BJ (cell line): ENCODE measurements at regions of chr3 and their contacts with region 1.

Region 1: GRCh38 chr3:136189859-136190617 is 6.1 kb downstream of the MSL2 start:
- DNase-seq: no peak
- H3K4me3 ChIP-seq: no peak overlapping the region
- H3K27me3 ChIP-seq: no peaks in the 10 kb centered on the region
- CTCF ChIP-seq: no peak

Region 2: GRCh38 chr3:135426508-135426907 is 763.5 kb before region 1 on chr3:
- CTCF ChIA-PET with region 1: no interaction called
- POLR2A ChIA-PET with region 1: no interaction called
- DNase-seq: no peak
- H3K4me3 ChIP-seq: no peak overlapping the region
- H3K27me3 ChIP-seq: no peaks in the 10 kb centered on the region
- CTCF ChIP-seq: no peak

Region 3: DNA sequence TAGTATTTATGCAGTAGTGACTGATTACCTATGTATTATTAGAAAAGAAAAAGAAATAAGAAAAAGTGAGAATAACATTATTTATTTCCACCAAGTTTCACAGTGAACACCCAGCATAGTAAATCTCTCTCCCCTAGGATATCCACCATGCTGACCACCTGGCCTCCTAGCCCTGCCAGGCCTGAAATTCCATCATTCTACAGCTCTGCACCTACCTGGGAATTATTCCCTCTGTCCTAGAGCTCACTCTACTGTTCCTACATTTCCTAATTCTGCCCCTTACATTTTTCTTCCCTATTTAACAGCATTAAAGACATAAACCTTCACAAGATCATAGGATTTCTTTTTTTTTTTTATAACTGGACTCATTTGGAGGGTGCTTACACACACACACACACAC is 749.8 kb before region 1 on chr3:
- CTCF ChIA-PET with region 1: no interaction called
- POLR2A ChIA-PET with region 1: no interaction called
- DNase-seq: no peak
- H3K4me3 ChIP-seq: no peak overlapping the region
- H3K27me3 ChIP-seq: no peaks in the 10 kb centered on the region
- CTCF ChIP-seq: no peak

Region 4: GRCh38 chr3:136366289-136366688 is 176.3 kb after region 1 on chr3:
- CTCF ChIA-PET with region 1: no interaction called
- POLR2A ChIA-PET with region 1: no interaction called
- DNase-seq: no peak
- H3K4me3 ChIP-seq: no peak overlapping the region
- H3K27me3 ChIP-seq: no peaks in the 10 kb centered on the region
- CTCF ChIP-seq: no peak

Region 5: GRCh38 chr3:136735103-136735502 is 545.1 kb after region 1 on chr3:
- CTCF ChIA-PET with region 1: no interaction called
- POLR2A ChIA-PET with region 1: interaction called, 12 read pairs
- DNase-seq: no peak
- H3K4me3 ChIP-seq: no peak overlapping the region
- H3K27me3 ChIP-seq: no peaks in the 10 kb centered on the region
- CTCF ChIP-seq: no peak